Psoas muscle (tissue), 8 donors: ENCODE measurements at regions of chr6 and their contacts with region 1.

Region 1: DNA sequence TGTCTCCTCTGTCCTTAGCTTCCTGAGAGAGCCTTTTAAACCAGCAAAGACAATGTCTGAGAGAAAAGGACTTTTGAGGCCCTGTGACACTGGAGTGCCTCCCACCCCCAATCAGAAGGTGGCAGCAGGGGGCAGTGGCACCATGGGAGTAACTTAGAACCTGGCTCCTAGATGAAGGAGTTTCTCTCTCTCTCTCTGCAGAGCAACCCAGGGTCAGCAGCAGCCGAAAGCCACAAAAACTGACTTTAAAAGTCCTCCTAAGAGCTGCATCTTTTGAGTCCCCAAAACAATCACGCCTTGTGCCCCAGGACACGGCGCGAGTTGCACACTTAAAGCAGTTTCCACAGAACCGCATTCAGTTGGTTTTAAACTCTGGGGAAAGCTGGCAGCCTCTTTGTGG is 5.3 kb upstream of the TCP11 start:
- DNase-seq: peak in 1 of 2 donors; percentile 24
- ATAC-seq: peak in 2 of 4 donors; percentile 57 to 65
- H3K4me3 ChIP-seq: no peak overlapping the region
- H3K27ac ChIP-seq: no peak overlapping the region
- H3K4me1 ChIP-seq: no peaks in the 10 kb centered on the region
- H3K27me3 ChIP-seq: peaks cover 0 to 3% (median 1%) of the 10 kb centered on the region in 3 donors
- CTCF ChIP-seq: peak; percentile 43

Region 2: GRCh38 chr6:35240840-35241801 is 94.7 kb after region 1 on chr6:
- intact Hi-C with region 1: loop called in 1 of 2 experiments (anchors 5 kb)
- DNase-seq: peak; percentile 65 to 79
- ATAC-seq: peak; percentile 80 to 87 (median 84)
- H3K4me3 ChIP-seq: no peak overlapping the region
- H3K27ac ChIP-seq: no peak overlapping the region
- H3K4me1 ChIP-seq: no peaks in the 10 kb centered on the region
- H3K27me3 ChIP-seq: no peaks in the 10 kb centered on the region
- CTCF ChIP-seq: peak; percentile 93